HEK293 (cell line): ENCODE measurements at regions of chrX and their contacts with region 1.

Region 1: DNA sequence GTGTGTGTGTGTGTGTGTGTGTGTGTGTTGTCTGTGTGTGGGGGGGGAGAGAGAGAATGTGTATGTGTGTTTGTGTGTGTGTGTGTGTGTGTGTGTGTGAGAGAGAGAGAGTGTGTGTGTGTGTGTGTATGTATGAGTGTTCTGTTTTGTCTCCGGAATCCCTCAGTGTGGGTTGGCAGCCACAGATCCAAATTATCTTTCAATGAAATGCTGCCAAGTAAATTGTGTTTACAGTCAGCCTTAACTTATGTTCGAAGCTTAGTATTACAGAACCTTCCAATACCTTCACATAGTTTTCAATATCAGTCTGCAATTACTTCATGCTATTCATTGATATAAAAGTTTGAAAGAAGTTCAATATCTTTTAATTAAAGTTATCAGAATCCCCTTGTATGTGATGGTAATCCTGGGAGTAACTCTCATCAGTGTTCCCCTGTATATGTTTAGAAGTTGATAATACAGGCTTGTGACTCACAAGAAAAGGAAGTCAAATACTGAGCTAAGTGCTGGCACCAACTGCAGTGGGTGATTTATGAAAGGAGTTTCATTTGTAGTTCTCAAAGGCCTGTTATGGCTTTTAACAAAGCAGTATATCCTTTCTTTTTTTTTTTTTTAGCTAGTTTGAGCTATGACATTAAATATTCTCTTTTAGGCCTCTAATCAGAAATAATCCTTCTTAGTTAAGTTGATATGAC is 51.6 kb upstream of the HTR2C start:
- H3K4me3 ChIP-seq: no peak overlapping the region
- H3K27ac ChIP-seq: no peak overlapping the region
- H3K4me1 ChIP-seq: no peaks in the 10 kb centered on the region
- CTCF ChIP-seq: no peak

Region 2: DNA sequence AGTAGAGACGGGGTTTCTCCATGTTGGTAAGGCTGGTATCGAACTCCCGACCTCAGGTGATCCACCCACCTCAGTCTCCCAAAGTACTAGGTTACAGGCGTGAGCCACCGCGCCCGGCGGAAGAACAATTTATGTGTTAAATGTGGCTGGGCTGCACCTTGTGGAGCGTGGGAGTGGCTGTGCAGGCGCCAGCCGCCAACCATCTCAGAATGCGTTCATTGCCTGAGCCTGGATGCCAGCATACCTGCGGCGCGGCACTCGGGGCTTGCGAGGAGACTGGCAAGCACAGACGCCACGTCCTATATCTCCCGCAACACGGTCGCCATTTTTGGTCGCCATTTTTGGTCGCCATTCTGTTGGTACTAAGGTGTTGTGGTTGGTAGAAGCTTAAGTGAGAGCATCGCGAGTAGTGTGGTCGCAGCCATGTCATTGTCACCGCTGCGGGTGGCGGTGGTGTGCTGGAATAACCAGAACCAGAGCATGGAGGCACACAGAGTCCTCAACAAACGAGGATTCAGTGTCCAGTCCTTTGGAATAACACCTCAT is 141.9 kb before region 1 on chrX:
- CTCF ChIA-PET with region 1: interaction called, 10 read pairs
- POLR2A ChIA-PET with region 1: no interaction called
- H3K4me3 ChIP-seq: no peak overlapping the region
- H3K27ac ChIP-seq: no peak overlapping the region
- H3K4me1 ChIP-seq: no peaks in the 10 kb centered on the region
- CTCF ChIP-seq: no peak